PC-3 (cell line): ENCODE measurements at regions of chr14 and their contacts with region 1.

Region 1: GRCh38 chr14:34379816-34380463 is 82.1 kb downstream of the SPTSSA start:
- DNase-seq: no peak
- ATAC-seq: no peak
- H3K4me3 ChIP-seq: no peak overlapping the region
- H3K27ac ChIP-seq: no peak overlapping the region
- H3K4me1 ChIP-seq: peaks cover 9% of the 10 kb centered on the region
- H3K27me3 ChIP-seq: no peaks in the 10 kb centered on the region
- CTCF ChIP-seq: no peak

Region 2: DNA sequence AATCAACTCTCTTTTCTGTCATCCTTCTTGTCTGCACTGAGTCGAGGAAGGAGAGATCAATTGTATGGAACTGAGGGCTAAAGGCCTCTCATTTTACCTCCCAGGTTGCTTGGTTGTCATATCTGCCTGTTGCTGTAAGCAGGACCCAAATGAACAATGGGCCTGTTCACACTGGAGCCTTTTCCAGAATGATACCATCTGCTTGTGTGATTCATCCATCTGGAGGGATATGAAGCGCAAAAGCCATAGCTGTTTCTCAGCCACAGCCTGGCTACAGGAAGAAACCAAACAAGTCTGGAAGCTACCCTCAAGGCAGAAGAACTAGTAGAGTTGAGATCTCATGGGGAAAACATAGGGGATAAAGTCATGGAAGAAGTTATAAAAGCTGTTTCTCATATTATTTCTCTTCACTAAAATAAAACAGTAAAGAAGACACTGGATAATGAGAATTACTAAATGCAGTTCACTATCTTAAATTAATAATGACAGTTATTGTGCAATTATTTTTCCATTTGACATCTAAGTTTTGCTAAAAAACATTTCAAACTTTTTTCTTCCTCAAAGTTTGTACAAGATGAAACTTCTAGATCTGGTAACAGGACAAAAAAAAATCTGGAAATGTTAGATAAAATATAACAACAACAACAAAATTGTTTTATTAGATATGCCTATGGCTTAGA is 24.2 kb before region 1 on chr14:
- CTCF ChIA-PET with region 1: no interaction called
- POLR2A ChIA-PET with region 1: no interaction called
- intact Hi-C with region 1: loop called (anchors 1 kb)
- DNase-seq: peak; percentile 82
- ATAC-seq: peak; percentile 87
- H3K4me3 ChIP-seq: no peak overlapping the region
- H3K27ac ChIP-seq: peak overlapping the region; percentile 69
- H3K4me1 ChIP-seq: peaks cover 31% of the 10 kb centered on the region
- H3K27me3 ChIP-seq: no peaks in the 10 kb centered on the region
- CTCF ChIP-seq: no peak